A673 (cell line): ENCODE measurements at regions of chr3 and their contacts with region 1.

Region 1: GRCh38 chr3:22117751-22118346 is 366.8 kb upstream of the ZNF385D start:
- DNase-seq: peak; percentile 42
- H3K4me3 ChIP-seq: no peak overlapping the region
- H3K27ac ChIP-seq: no peak overlapping the region
- H3K4me1 ChIP-seq: no peaks in the 10 kb centered on the region
- H3K27me3 ChIP-seq: no peaks in the 10 kb centered on the region
- CTCF ChIP-seq: peak; percentile 64

Region 2: DNA sequence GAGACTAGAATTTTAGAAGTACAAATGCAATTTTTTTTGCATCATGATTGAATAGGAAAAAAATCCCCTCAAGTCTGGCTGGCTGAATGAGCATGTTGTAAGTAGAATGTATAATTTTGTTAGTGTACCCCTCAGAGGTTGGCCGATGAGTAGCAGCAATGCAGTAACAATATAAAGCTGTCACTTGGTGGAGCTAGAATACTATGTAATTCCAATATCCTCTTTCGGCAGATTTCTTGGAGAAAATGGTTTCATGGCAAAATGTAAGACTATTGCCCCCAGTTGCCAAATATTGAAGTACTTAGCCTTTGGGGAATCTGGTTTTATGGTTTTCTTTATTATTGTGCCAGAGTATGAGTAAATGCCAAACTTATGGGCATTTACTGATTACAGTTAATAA is 1892.1 kb before region 1 on chr3:
- CTCF ChIA-PET with region 1: no interaction called
- POLR2A ChIA-PET with region 1: no interaction called
- intact Hi-C with region 1: loop called (anchors 10 kb)
- DNase-seq: peak; percentile 62
- H3K4me3 ChIP-seq: no peak overlapping the region
- H3K27ac ChIP-seq: no peak overlapping the region
- H3K4me1 ChIP-seq: no peaks in the 10 kb centered on the region
- H3K27me3 ChIP-seq: peaks cover 12% of the 10 kb centered on the region
- CTCF ChIP-seq: peak; percentile 52

Region 3: GRCh38 chr3:20340324-20340928 is 1777.4 kb before region 1 on chr3:
- CTCF ChIA-PET with region 1: no interaction called
- POLR2A ChIA-PET with region 1: no interaction called
- intact Hi-C with region 1: loop called (anchors 1 kb)
- DNase-seq: peak; percentile 69
- H3K4me3 ChIP-seq: no peak overlapping the region
- H3K27ac ChIP-seq: no peak overlapping the region
- H3K4me1 ChIP-seq: no peaks in the 10 kb centered on the region
- H3K27me3 ChIP-seq: no peaks in the 10 kb centered on the region
- CTCF ChIP-seq: peak; percentile 83

Region 4: DNA sequence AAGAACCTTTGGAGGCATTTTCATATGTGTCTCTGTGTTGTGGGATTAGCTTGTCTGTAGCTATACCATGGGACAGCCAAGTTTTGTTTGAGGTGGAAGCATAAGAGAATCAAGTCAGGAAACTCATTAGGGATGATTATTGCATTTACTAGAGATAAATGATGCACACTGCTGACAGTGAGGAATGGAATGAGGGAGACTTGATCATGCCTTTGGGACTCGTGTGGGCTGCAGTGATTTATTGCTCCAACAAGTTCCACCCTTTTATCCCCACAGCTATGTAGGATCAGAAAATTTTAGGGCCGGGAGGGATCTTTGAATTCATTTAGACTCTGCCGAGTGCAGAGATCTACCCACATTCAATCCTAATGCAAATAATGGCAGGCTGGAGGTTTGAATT is 383.1 kb before region 1 on chr3:
- CTCF ChIA-PET with region 1: no interaction called
- POLR2A ChIA-PET with region 1: no interaction called
- intact Hi-C with region 1: no loop called
- DNase-seq: no peak
- H3K4me3 ChIP-seq: no peak overlapping the region
- H3K27ac ChIP-seq: no peak overlapping the region
- H3K4me1 ChIP-seq: no peaks in the 10 kb centered on the region
- H3K27me3 ChIP-seq: no peaks in the 10 kb centered on the region
- CTCF ChIP-seq: no peak